Naive thymus-derived CD4-positive, alpha-beta T cell (primary cell): ENCODE measurements at regions of chr12 and their contacts with region 1.

Region 1: GRCh38 chr12:96343347-96343954 is 56.8 kb downstream of the CDK17 start:
- DNase-seq: no peak
- ATAC-seq: peak; percentile 65
- H3K4me3 ChIP-seq: no peak overlapping the region
- H3K4me3 Mint-ChIP-seq: peak overlapping the region in 7 of 10 donors; percentile 22 to 64 (median 61)
- H3K27ac ChIP-seq: no peak overlapping the region
- H3K27ac Mint-ChIP-seq: peak overlapping the region in 5 of 9 donors; percentile 22 to 71 (median 48)
- H3K4me1 ChIP-seq: peaks cover 10 to 15% of the 10 kb centered on the region in 2 donors
- H3K4me1 Mint-ChIP-seq: peaks cover 37 to 70% (median 61%) of the 10 kb centered on the region in 7 donors
- H3K27me3 ChIP-seq: no peaks in the 10 kb centered on the region
- H3K27me3 Mint-ChIP-seq: no peaks in the 10 kb centered on the region

Region 2: GRCh38 chr12:96361074-96361473 is 17.6 kb after region 1 on chr12:
- CTCF ChIA-PET with region 1: interaction called, 3 read pairs
- POLR2A ChIA-PET with region 1: no interaction called
- intact Hi-C with region 1: loop called in 1 of 2 experiments (anchors 1 kb)
- DNase-seq: no peak
- ATAC-seq: no peak
- H3K4me3 ChIP-seq: no peak overlapping the region
- H3K4me3 Mint-ChIP-seq: peak overlapping the region in 4 of 10 donors; percentile 1 to 48 (median 28)
- H3K27ac ChIP-seq: no peak overlapping the region
- H3K27ac Mint-ChIP-seq: peak overlapping the region in 4 of 9 donors; percentile 8 to 59 (median 23)
- H3K4me1 ChIP-seq: peaks cover 21 to 57% of the 10 kb centered on the region in 2 donors
- H3K4me1 Mint-ChIP-seq: peaks cover 30 to 90% (median 84%) of the 10 kb centered on the region in 7 donors
- H3K27me3 ChIP-seq: no peaks in the 10 kb centered on the region
- H3K27me3 Mint-ChIP-seq: no peaks in the 10 kb centered on the region